ENCODE measurements at regions of chr3 and their contacts with region 1.

Region 1: DNA sequence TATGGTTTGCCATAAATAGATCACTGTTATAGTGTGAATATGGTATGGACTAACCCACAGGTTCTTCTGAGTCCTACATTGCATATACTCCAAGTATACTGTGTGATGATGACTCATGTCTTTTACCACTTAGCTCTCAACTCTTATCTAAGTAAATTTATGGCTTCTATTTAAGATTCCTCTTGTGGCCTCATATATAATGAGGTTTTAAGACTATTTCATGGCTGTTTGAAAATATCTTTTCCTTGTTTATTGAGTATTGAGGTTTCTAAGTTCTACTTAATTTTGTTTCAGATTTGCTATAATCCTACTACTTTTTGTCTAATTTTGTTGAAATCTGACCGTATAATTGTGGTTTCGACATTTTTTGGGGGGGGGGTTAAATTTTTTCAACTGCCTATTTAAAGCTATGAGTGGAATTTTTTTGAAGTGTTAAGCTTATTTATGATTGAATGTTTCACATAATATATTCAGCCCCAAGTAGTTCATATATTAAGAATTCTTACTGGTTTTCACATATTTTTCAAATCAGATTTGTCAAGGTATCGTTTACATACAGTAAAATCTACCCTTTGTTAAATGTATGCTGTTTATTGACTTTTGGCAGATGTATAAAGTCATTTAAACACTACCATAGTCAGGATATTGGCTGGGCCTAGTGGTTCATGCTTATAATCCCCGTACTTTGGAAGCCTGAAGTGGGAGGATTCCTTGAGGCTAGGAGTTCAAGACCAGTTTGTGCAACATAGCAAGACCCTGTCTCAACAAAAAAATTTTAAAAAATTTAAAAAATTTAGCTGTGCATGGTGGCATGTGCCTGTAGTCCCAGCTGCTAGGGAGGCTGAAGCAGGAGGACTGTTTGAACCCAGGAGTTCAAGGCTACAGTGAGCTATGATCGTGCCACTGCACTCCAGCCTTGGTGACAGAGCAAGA is 11.7 kb downstream of the SLC25A36 start:
- DNase-seq: peak; percentile 38

Region 2: DNA sequence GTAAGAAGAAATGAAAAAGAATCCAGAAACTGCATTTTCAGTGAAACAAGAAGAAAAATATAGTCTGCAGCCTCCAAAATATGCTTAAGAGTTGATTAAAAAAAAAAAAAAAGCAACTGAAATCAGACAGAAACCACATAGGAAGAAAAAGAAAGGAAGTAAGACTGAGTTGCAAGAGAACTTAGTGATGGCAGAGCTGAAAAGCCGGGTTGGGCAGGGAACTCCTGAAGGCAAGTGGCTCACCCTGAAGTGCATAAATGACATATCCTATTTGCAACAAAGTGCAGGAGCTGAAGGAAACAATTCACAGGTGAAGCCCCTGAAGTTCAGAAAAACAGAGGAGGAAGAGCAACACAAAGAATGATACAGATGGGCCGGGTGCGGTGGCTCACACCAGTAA is 120.4 kb before region 1 on chr3:
- CTCF ChIA-PET with region 1: no interaction called
- POLR2A ChIA-PET with region 1: no interaction called
- DNase-seq: no peak

Region 3: GRCh38 chr3:140859592-140860336 is 93.5 kb before region 1 on chr3:
- CTCF ChIA-PET with region 1: no interaction called
- POLR2A ChIA-PET with region 1: no interaction called
- DNase-seq: no peak

Region 4: GRCh38 chr3:140941434-140942220 is 11.7 kb before region 1 on chr3 and contains the start of gene SLC25A36:
- CTCF ChIA-PET with region 1: interaction called, 6 read pairs
- POLR2A ChIA-PET with region 1: interaction called, 12 read pairs
- DNase-seq: peak; percentile 93

Measured in HEK293T (cell line).